CD8-positive, alpha-beta T cell (primary cell): ENCODE measurements at regions of chr9 and their contacts with region 1.

Region 1: GRCh38 chr9:36102742-36103495 is 33.6 kb upstream of the GLIPR2 start:
- DNase-seq: peak; percentile 72 to 93 (median 90)
- ATAC-seq: peak; percentile 100
- H3K4me3 ChIP-seq: no peak overlapping the region
- H3K4me3 Mint-ChIP-seq: no peak overlapping the region
- H3K27ac ChIP-seq: no peak overlapping the region
- H3K27ac Mint-ChIP-seq: no peak overlapping the region
- H3K4me1 ChIP-seq: no peaks in the 10 kb centered on the region
- H3K4me1 Mint-ChIP-seq: peaks cover 6% of the 10 kb centered on the region
- H3K27me3 ChIP-seq: no peaks in the 10 kb centered on the region
- H3K27me3 Mint-ChIP-seq: no peaks in the 10 kb centered on the region
- CTCF ChIP-seq: peak; percentile 80

Region 2: GRCh38 chr9:35760651-35761050 is 342.3 kb before region 1 on chr9:
- CTCF ChIA-PET with region 1: no interaction called
- POLR2A ChIA-PET with region 1: no interaction called
- intact Hi-C with region 1: no loop called
- DNase-seq: no peak
- ATAC-seq: no peak
- H3K4me3 ChIP-seq: no peak overlapping the region
- H3K4me3 Mint-ChIP-seq: no peak overlapping the region
- H3K27ac ChIP-seq: no peak overlapping the region
- H3K27ac Mint-ChIP-seq: no peak overlapping the region
- H3K4me1 ChIP-seq: peaks cover 18% of the 10 kb centered on the region
- H3K4me1 Mint-ChIP-seq: peaks cover 53% of the 10 kb centered on the region
- H3K27me3 ChIP-seq: no peaks in the 10 kb centered on the region
- H3K27me3 Mint-ChIP-seq: no peaks in the 10 kb centered on the region
- CTCF ChIP-seq: no peak

Region 3: GRCh38 chr9:36092509-36093215 is 10.3 kb before region 1 on chr9:
- CTCF ChIA-PET with region 1: interaction called, 25 read pairs
- POLR2A ChIA-PET with region 1: no interaction called
- intact Hi-C with region 1: no loop called
- DNase-seq: peak in 7 of 9 experiments; percentile 1 to 70 (median 24)
- ATAC-seq: peak; percentile 84
- H3K4me3 ChIP-seq: no peak overlapping the region
- H3K4me3 Mint-ChIP-seq: peak overlapping the region; percentile 67
- H3K27ac ChIP-seq: peak overlapping the region in 1 of 2 experiments; percentile 63
- H3K27ac Mint-ChIP-seq: peak overlapping the region; percentile 89
- H3K4me1 ChIP-seq: peaks cover 5% of the 10 kb centered on the region
- H3K4me1 Mint-ChIP-seq: peaks cover 12% of the 10 kb centered on the region
- H3K27me3 ChIP-seq: no peaks in the 10 kb centered on the region
- H3K27me3 Mint-ChIP-seq: no peaks in the 10 kb centered on the region
- CTCF ChIP-seq: no peak

Region 4: GRCh38 chr9:36127652-36128244 is 24.8 kb after region 1 on chr9:
- CTCF ChIA-PET with region 1: interaction called, 20 read pairs
- POLR2A ChIA-PET with region 1: no interaction called
- intact Hi-C with region 1: no loop called
- DNase-seq: peak in 2 of 9 experiments; percentile 43 to 58
- ATAC-seq: peak; percentile 57
- H3K4me3 ChIP-seq: no peak overlapping the region
- H3K4me3 Mint-ChIP-seq: no peak overlapping the region
- H3K27ac ChIP-seq: no peak overlapping the region
- H3K27ac Mint-ChIP-seq: no peak overlapping the region
- H3K4me1 ChIP-seq: peaks cover 20% of the 10 kb centered on the region
- H3K4me1 Mint-ChIP-seq: peaks cover 34% of the 10 kb centered on the region
- H3K27me3 ChIP-seq: no peaks in the 10 kb centered on the region
- H3K27me3 Mint-ChIP-seq: no peaks in the 10 kb centered on the region
- CTCF ChIP-seq: no peak

Region 5: DNA sequence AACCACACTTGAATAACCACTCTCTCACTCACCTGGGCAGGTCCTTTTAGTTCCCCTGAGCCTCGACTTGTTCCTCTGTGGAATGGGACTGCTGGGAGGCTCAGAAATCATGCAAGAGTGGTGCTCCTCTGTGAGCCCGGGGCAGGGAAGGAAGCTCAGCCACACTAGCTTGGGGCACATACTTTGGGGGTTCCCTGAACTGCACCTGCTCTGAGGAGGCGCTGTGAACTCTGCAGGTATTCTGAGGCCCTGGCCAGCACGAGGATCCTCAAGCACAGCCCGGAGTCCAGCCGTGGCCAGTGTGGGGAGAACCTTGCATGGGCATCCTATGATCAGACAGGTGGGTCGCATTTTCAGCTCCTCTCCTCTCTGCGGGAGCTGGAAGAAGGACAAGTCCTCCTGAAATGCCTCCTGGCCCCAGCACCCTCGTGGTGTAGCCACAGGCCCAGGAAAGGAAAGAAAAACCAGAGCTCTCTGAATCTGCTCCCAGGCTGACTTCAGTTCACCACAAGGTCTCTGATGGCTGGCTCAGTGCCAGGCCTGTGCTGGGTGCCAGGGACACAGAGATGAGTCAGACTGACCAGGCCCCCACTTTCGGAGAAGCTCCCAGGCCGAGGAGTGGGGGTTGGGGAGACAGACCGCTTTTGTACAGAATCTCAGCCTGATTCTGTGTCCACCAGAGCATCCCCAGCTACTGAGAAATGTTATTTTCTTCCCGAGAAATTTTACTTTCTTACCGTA is 45.6 kb after region 1 on chr9:
- CTCF ChIA-PET with region 1: interaction called, 15 read pairs
- POLR2A ChIA-PET with region 1: interaction called, 3 read pairs
- intact Hi-C with region 1: loop called in 1 of 2 experiments (anchors 1 kb)
- DNase-seq: peak; percentile 44 to 89 (median 79)
- ATAC-seq: peak; percentile 6
- H3K4me3 ChIP-seq: no peak overlapping the region
- H3K4me3 Mint-ChIP-seq: peak overlapping the region; percentile 8
- H3K27ac ChIP-seq: peak overlapping the region in 1 of 2 experiments; percentile 28
- H3K27ac Mint-ChIP-seq: peak overlapping the region; percentile 71
- H3K4me1 ChIP-seq: peaks cover 90% of the 10 kb centered on the region
- H3K4me1 Mint-ChIP-seq: peaks cover 87% of the 10 kb centered on the region
- H3K27me3 ChIP-seq: no peaks in the 10 kb centered on the region
- H3K27me3 Mint-ChIP-seq: no peaks in the 10 kb centered on the region
- CTCF ChIP-seq: no peak

Region 6: GRCh38 chr9:36166101-36166927 is 63.4 kb after region 1 on chr9:
- CTCF ChIA-PET with region 1: interaction called, 576 read pairs
- POLR2A ChIA-PET with region 1: interaction called, 31 read pairs
- intact Hi-C with region 1: loop called (anchors 1 kb)
- DNase-seq: peak; percentile 64 to 92 (median 81)
- ATAC-seq: peak; percentile 98
- H3K4me3 ChIP-seq: peak overlapping the region; percentile 34 to 53
- H3K4me3 Mint-ChIP-seq: peak overlapping the region; percentile 70
- H3K27ac ChIP-seq: no peak overlapping the region
- H3K27ac Mint-ChIP-seq: no peak overlapping the region
- H3K4me1 ChIP-seq: peaks cover 7% of the 10 kb centered on the region
- H3K4me1 Mint-ChIP-seq: peaks cover 10% of the 10 kb centered on the region
- H3K27me3 ChIP-seq: no peaks in the 10 kb centered on the region
- H3K27me3 Mint-ChIP-seq: no peaks in the 10 kb centered on the region
- CTCF ChIP-seq: peak; percentile 83

Region 7: DNA sequence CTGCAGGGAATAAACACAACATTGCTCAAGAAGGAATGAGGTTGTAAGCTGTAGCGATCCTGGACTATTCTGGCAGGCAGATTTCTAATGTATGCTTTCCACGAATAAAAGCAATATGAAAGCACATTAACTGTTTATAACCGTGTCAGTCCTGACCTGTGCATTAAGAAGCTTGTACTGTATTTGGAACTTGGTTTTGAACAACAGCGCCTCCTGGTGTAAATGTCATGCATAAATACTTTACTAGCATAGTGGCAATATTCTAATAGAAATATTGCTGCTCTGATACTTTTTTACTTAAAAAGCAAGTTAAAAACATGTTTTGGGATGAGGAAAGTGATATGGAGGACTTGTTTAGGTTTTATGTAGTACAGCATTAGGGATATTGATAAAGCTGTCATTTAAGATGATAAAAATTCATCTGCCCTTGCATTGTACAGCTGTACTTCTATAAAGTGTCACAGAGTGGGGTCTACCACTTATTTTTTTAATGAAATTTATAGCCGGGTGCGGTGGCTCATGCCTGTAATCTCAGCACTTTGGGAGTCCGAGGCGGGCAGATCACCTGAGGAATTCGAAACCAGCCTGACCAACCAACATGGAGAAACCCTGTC is 226.0 kb after region 1 on chr9:
- CTCF ChIA-PET with region 1: interaction called, 5 read pairs
- POLR2A ChIA-PET with region 1: no interaction called
- intact Hi-C with region 1: loop called (anchors 2 to 5 kb)
- DNase-seq: peak in 5 of 9 experiments; percentile 11 to 76 (median 48)
- ATAC-seq: peak; percentile 75
- H3K4me3 ChIP-seq: no peak overlapping the region
- H3K4me3 Mint-ChIP-seq: no peak overlapping the region
- H3K27ac ChIP-seq: no peak overlapping the region
- H3K27ac Mint-ChIP-seq: no peak overlapping the region
- H3K4me1 ChIP-seq: no peaks in the 10 kb centered on the region
- H3K4me1 Mint-ChIP-seq: peaks cover 5% of the 10 kb centered on the region
- H3K27me3 ChIP-seq: no peaks in the 10 kb centered on the region
- H3K27me3 Mint-ChIP-seq: no peaks in the 10 kb centered on the region
- CTCF ChIP-seq: peak; percentile 92